Ovary (tissue), 10 donors: ENCODE measurements at regions of chr11 and their contacts with region 1.

Region 1: GRCh38 chr11:8099291-8099899 is 18.4 kb downstream of the TUB start:
- DNase-seq: peak; percentile 51 to 85 (median 76)
- H3K4me3 ChIP-seq: no peak overlapping the region
- H3K27ac ChIP-seq: no peak overlapping the region
- H3K4me1 ChIP-seq: no peaks in the 10 kb centered on the region
- H3K27me3 ChIP-seq: no peaks in the 10 kb centered on the region
- CTCF ChIP-seq: peak; percentile 13 to 61 (median 42)
- EP300 ChIP-seq: no peak
- POLR2A ChIP-seq: no peak

Region 2: DNA sequence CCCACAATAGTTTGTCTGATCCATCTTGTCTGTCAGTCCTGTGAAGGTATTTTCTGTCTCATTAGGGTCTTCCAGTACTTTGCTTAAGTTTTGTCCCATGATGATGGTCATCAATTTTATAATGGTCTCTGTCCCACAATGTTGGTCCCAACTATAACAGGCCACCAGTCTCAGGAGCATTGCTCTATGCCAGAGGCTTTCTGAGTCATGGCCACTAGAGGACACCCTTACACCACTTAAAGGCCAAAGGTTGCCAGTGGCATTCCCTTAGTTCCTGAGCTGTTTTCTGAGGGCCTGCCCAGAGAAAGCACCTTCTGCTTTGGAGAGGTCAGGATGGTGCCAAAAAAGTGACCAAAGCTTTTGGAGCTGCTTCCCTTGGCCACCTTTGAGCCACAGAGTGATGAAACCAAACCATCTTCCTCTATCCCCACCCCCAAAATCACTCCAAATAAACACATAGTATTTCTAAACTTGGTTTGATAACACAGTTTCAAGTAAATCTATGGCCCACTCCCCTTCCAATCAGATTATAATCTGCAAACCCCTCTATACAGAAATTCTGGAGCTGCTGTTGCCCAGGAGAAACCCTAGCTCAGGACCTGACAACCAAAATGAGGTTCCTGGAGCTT is 92.9 kb before region 1 on chr11:
- intact Hi-C with region 1: loop called in 1 of 4 experiments (anchors 10 kb)
- DNase-seq: peak; percentile 40 to 61 (median 47)
- H3K4me3 ChIP-seq: no peak overlapping the region
- H3K27ac ChIP-seq: no peak overlapping the region
- H3K4me1 ChIP-seq: no peaks in the 10 kb centered on the region
- H3K27me3 ChIP-seq: no peaks in the 10 kb centered on the region
- CTCF ChIP-seq: peak in 2 of 3 donors; percentile 68
- EP300 ChIP-seq: no peak
- POLR2A ChIP-seq: no peak

Region 3: GRCh38 chr11:8018484-8019313 is 80.7 kb before region 1 on chr11:
- intact Hi-C with region 1: loop called in 1 of 4 experiments (anchors 5 kb)
- DNase-seq: peak; percentile 79 to 91 (median 83)
- H3K4me3 ChIP-seq: peak overlapping the region; percentile 79
- H3K27ac ChIP-seq: peak overlapping the region; percentile 82 to 89
- H3K4me1 ChIP-seq: no peaks in the 10 kb centered on the region
- H3K27me3 ChIP-seq: no peaks in the 10 kb centered on the region
- CTCF ChIP-seq: no peak
- EP300 ChIP-seq: no peak
- POLR2A ChIP-seq: peak; percentile 28